GM13977 (cell line): ENCODE measurements at regions of chr19 and their contacts with region 1.

Region 1: DNA sequence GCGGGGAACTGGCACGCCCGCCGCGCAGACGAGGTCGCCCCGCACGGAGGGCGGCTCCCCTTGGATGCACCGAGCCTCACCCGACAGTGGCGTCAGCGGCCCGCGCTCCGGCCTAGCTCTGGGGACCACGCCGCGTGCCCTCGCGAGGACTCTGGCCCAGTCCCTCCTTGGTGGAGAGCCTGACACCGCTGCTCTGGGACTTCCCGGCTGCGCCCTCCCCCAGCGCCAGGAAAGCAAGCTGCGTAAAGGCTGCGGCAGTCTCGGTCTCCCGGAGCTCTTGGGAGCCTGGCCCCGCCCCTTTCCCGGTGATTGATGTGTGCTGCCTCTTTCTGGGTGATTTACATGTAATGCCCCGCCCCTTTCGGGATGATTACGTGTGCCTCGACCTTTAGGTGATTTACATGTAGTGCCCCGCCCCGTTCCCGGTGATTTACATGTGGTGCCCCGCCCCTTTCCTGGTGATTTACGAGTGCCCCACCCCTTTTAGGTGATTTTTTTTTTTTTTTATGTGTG is at the start of gene LENG9:
- DNase-seq: peak; percentile 96
- CTCF ChIP-seq: no peak

Region 2: DNA sequence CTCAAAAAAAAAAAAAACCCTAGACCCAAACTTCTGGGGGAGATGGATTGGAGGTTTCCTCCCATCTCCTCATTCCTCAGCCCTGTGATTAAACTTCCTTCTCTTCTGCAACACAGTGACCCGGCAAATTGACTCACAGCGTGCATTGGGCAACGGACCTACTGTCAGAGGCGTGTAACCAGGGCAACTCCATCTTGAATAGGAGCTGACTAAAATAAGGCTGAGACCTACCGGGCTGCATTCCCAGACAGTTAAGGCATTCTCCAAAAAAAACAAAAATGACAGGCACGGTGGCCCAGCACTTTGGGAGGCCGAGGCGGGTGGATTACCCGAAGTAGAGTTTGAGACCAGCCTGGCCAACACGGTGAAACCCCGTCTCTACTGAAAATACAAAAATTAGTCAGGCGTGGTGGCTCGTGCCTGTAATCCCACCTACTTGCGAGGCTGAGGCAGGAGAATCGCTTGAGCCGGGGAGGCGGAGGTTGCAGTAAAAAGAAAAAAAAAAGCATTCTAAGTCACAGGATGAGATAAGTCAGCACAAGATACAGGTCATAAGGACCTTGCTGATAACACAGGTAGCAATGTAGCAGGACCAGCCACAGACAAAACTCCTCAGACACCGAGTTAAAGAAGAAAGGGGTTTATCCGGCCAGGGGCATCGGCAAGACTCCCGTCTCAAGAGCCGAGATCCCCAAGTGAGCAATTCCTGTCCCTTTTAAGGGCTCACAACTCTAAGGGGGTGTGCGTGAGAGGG is 489.2 kb after region 1 on chr19:
- in situ Hi-C with region 1: no loop called
- DNase-seq: no peak
- CTCF ChIP-seq: no peak

Region 3: GRCh38 chr19:54967611-54968010 is 504.0 kb after region 1 on chr19:
- in situ Hi-C with region 1: no loop called
- DNase-seq: no peak
- CTCF ChIP-seq: no peak

Region 4: DNA sequence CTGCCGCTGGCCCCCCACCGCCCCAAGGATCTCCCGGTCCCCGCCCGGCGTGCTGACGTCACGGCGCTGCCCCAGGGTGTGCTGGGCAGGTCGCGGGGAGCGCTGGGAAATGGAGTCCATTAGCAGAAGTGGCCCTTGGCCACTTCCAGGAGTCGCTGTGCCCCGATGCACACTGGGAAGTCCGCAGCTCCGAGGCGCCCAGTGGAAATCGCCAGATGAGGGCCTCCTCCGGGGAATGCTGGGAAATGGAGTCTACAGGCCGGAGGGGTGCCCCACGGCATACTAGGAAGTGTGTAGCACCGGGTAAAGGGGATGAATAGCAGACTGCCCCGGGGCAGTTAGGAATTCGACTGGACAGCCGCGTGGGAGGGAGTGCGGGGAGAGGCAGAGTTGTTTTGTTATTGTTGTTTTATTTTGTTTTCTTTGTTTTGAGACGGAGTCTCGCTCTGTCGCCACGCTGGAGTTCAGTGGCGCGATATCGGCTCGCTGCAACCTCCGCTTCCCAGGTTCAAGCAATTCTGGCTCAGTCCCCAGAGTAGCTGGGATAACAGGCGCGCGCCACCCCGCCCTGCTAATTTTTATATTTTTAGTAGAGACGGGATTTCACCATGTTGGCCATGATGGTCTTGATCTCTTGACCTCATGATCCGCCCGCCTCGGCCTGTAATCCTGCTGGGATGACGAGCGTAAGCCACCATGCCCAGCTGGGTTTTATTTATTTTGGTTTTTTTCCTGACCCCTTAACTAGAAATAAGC is 654.2 kb after region 1 on chr19 and contains the start of gene PPP1R12C:
- in situ Hi-C with region 1: loop called (anchors 25 kb)
- DNase-seq: peak; percentile 100
- CTCF ChIP-seq: no peak

Region 5: GRCh38 chr19:55599468-55600279 is 1136.1 kb after region 1 on chr19 and contains the start of gene FIZ1:
- in situ Hi-C with region 1: loop called (anchors 25 kb)
- DNase-seq: peak; percentile 94
- CTCF ChIP-seq: no peak